K562 (cell line): ENCODE measurements at regions of chr7 and their contacts with region 1.

Region 1: DNA sequence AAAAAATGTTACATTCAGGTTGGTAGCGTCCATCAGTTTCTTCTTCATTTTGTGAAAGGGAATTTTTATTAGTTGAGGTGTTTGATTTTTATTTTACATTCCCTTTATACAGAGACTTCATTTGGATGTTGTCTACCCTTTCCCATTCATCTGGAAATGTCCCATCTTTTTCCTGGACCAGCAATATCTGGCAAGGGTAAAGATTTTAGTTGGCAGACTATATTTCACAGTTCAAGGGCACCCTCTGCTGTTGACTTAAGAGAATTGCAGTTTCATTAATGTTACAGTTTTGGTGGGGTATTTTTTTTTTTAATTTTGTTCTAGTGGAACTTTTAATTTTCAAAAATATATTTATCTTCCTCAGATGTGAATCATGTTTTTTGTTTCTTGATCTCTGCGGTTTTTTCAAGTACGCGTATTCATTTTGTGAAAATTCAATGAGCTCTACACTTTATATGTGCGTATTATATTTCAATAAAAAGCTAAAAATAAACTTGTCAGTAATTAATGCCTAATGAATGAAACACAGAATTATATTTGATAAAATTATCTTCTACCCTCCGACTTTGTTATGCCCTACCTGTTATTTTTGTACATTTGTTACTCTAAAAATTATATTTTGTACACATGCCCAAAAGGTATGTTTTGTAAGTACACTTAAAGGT is 97.9 kb upstream of the KLF14 start:
- DNase-seq: peak; percentile 64 to 65 (median 64)
- ATAC-seq: peak; percentile 64
- H3K4me3 ChIP-seq: no peak overlapping the region
- H3K27ac ChIP-seq: no peak overlapping the region
- H3K4me1 ChIP-seq: no peaks in the 10 kb centered on the region
- H3K27me3 ChIP-seq: peaks cover 8 to 18% of the 10 kb centered on the region in 2 experiments; a peak in 4 of 5 replicates
- CTCF ChIP-seq: peak; percentile 71 to 92 (median 79); a peak in 5 of 6 replicates
- EP300 ChIP-seq: no peak
- POLR2A ChIP-seq: no peak
- RAD21 ChIP-seq: peak; percentile 81 to 83

Region 2: DNA sequence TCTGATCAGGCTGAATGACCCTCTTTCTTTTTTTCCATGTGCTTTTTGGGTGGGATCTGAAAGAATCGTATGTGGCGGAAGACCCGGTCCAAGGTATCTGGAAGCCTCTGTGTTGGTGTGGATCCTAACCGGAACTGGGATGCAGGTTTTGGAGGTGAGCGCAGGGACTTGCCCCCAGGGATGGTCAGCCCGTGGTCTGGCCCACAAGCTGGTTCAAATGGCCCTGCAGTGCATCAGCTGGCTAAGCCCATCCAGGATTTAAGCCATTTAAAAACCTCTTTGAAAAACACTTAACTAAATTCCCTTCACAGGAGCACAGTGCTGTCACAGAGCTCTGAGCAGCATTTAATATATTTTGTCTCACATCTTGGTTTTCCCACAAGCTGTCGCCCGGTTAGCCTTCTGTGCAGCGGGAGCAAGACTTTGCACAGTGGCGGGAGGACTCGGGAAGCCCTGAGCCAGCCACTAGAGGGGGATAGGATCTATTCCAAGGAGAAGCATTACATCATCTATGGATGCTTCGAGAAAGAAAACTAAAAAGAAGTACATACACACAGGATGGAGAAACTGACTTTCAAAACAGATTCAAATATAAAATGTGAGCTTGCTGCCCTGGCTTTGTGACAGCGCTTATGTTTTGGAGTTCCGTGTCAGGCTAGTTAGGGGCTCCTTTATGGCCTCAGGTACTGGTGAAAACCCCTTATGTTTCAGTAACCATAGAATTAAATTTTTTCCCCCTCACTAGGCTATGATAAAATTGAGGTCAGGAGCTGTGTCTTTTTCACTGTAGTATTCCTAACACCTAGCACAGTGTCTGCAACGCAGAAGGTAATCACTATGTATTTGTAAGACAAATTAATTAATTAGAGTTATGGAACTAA is 553.9 kb before region 1 on chr7:
- CTCF ChIA-PET with region 1: no interaction called
- POLR2A ChIA-PET with region 1: no interaction called
- in situ Hi-C with region 1: no loop called
- intact Hi-C with region 1: loop called (anchors 10 kb)
- DNase-seq: peak in 3 of 4 experiments; percentile 46 to 69 (median 59)
- ATAC-seq: peak; percentile 96
- H3K4me3 ChIP-seq: no peak overlapping the region
- H3K27ac ChIP-seq: no peak overlapping the region
- H3K4me1 ChIP-seq: peaks cover 1 to 3% of the 10 kb centered on the region in 2 experiments; a peak in 2 of 5 replicates
- H3K27me3 ChIP-seq: peaks cover 24 to 26% of the 10 kb centered on the region in 2 experiments
- CTCF ChIP-seq: peak; percentile 64 to 84 (median 76)
- EP300 ChIP-seq: no peak
- POLR2A ChIP-seq: no peak
- RAD21 ChIP-seq: peak; percentile 58 to 82

Region 3: GRCh38 chr7:130814778-130815335 is 17.1 kb before region 1 on chr7:
- CTCF ChIA-PET with region 1: interaction called, 15 read pairs
- POLR2A ChIA-PET with region 1: no interaction called
- in situ Hi-C with region 1: no loop called
- intact Hi-C with region 1: no loop called
- DNase-seq: peak in 1 of 4 experiments; percentile 37
- ATAC-seq: 0 out of 3 replicates have a peak, but pooled peaks have one; percentile 42
- H3K4me3 ChIP-seq: no peak overlapping the region
- H3K27ac ChIP-seq: no peak overlapping the region
- H3K4me1 ChIP-seq: no peaks in the 10 kb centered on the region
- H3K27me3 ChIP-seq: peaks cover 0 to 8% of the 10 kb centered on the region in 2 experiments; a peak in 2 of 5 replicates
- CTCF ChIP-seq: peak; percentile 28 to 59 (median 38); a peak in 4 of 6 replicates
- EP300 ChIP-seq: no peak
- POLR2A ChIP-seq: no peak
- RAD21 ChIP-seq: 0 out of 4 replicates have a peak, but pooled peaks of 1 of the 2 experiments have one; percentile 29

Region 4: GRCh38 chr7:131327626-131328376 is 495.9 kb after region 1 on chr7 and contains the start of gene MKLN1:
- CTCF ChIA-PET with region 1: no interaction called
- POLR2A ChIA-PET with region 1: no interaction called
- in situ Hi-C with region 1: no loop called
- intact Hi-C with region 1: no loop called
- DNase-seq: peak; percentile 98
- ATAC-seq: peak; percentile 96
- H3K4me3 ChIP-seq: peak within 1 kb of the TSS; percentile 87
- H3K27ac ChIP-seq: peak within 1 kb of the TSS; percentile 94
- H3K4me1 ChIP-seq: peaks cover 5 to 33% of the 10 kb centered on the region in 2 experiments; a peak in 3 of 5 replicates
- H3K27me3 ChIP-seq: no peaks in the 10 kb centered on the region
- CTCF ChIP-seq: 0 out of 6 replicates have a peak, but pooled peaks of 1 of the 3 experiments have one; percentile 3
- EP300 ChIP-seq: peak; percentile 28; the same call in 1 of the 2 replicates
- POLR2A ChIP-seq: peak; percentile 99
- RAD21 ChIP-seq: peak in 1 of 2 experiments; percentile 9; a peak in 1 of 4 replicates
- polyA plus RNA-seq, gene MKLN1: 27.0 to 68.8 TPM